Sigmoid colon (tissue), 7 donors: ENCODE measurements at regions of chr10 and their contacts with region 1.

Region 1: GRCh38 chr10:122021379-122021778 is 32.4 kb downstream of the TACC2 start:
- DNase-seq: peak; percentile 86
- H3K4me3 ChIP-seq: peak overlapping the region; percentile 14 to 38 (median 26)
- H3K27ac ChIP-seq: peak overlapping the region; percentile 80 to 85 (median 81)
- H3K4me1 ChIP-seq: peaks cover 0 to 40% (median 31%) of the 10 kb centered on the region in 4 donors
- H3K27me3 ChIP-seq: no peaks in the 10 kb centered on the region
- CTCF ChIP-seq: no peak
- EP300 ChIP-seq: peak in 2 of 4 donors; percentile 46 to 73
- POLR2A ChIP-seq: no peak

Region 2: GRCh38 chr10:121994390-121994961 is 26.9 kb before region 1 on chr10:
- intact Hi-C with region 1: loop called (anchors 2 kb)
- DNase-seq: peak; percentile 92
- H3K4me3 ChIP-seq: peak overlapping the region; percentile 15 to 36 (median 31)
- H3K27ac ChIP-seq: peak overlapping the region; percentile 83 to 89 (median 88)
- H3K4me1 ChIP-seq: peaks cover 0 to 68% (median 63%) of the 10 kb centered on the region in 4 donors
- H3K27me3 ChIP-seq: no peaks in the 10 kb centered on the region
- CTCF ChIP-seq: no peak
- EP300 ChIP-seq: peak in 1 of 4 donors; percentile 69
- POLR2A ChIP-seq: peak in 1 of 2 donors; percentile 39

Region 3: DNA sequence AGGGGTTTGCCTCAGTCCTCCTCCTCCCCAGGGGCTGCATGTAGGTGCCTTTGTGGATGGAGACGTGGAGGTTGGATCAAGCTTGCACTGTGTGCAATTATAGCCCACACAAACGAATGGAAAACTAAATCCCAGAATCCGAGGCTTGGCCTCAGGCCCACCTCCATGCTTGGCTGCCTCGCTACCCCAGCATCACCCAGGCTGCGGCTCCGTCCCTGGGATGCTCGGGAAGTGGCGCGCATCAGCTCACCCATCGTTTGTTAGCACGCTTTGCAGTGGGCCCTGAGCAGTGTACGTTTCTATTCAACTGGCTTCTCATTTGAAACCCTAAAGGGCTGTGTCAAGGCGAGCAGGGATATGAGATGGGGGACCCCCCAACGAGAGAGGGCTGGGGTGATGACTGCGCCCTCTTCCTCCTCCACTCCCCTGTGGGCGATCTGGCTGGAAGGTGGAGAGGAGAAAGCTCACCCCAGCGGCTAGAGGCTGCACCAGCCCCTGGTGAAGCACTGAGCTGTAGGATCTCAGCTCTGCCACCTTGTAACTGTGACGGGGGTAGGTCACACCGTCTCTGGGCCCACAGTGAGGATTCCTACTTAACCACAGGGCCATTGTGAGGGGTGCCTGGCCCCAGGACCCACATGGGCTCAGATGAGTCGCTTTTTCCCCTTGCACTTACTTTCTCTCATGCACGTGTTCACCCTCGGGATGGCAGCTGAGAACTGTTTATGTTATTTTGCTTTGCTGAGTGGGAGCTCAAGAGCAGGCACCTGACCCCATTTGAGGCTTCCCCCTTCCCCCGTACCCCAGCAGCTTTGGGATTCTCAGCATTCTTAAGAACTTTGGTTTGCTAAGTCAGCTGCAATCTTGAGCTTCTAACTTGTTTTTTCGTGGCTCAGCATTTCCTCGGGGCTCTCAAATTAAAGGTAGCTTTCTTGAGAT is 237.0 kb after region 1 on chr10:
- intact Hi-C with region 1: no loop called
- DNase-seq: peak; percentile 62
- H3K4me3 ChIP-seq: no peak overlapping the region
- H3K27ac ChIP-seq: peak overlapping the region in 3 of 4 donors; percentile 27 to 47 (median 41)
- H3K4me1 ChIP-seq: peaks cover 0 to 22% (median 2%) of the 10 kb centered on the region in 4 donors
- H3K27me3 ChIP-seq: no peaks in the 10 kb centered on the region
- CTCF ChIP-seq: no peak
- EP300 ChIP-seq: no peak
- POLR2A ChIP-seq: no peak